ENCODE measurements at regions of chr5 and their contacts with region 1.

Region 1: DNA sequence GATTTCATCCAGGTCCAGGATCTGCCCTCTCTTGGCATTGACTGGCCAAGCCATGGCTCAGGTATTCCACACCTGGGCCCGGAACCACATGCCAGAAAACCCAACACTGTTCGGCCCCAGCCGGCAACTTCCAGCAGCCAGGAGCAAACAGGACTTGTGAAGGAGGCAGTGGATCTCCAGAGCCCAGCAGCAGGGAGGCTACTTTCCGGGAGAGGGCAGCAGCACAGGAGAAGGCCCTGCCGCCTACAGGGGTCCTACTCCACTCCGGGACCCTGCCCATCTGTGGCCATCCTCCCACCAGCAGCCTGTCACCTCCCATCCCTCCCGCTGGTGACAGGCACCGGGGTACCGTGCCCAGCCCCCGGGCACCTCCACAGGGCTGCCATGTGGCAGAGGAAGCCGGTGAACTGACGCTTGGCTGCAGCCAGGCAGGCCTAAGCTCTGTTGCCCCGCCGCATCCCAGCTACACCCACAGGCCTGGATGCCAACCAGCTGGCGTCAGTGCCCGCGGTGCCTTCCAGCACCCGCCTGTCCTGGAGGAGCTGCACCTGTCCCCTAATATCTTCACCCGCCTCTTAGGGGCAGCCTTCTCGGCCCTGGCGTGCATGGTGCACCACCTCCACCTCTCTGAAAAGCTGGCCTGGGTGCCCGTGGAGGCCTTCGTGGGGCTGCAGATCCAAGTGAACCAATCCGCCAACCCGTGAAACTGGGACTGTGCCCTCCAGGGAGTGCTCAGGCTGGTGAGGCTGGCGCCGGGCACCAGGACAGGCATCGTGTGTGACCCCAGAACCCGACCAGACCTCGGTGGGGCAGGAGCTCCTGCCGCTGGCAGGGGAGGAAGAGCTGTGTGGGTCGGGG is 18.9 kb upstream of the SLC30A5 start:
- DNase-seq: no peak
- ATAC-seq: no peak
- H3K4me3 ChIP-seq: no peak overlapping the region
- H3K27ac ChIP-seq: no peak overlapping the region
- H3K4me1 ChIP-seq: peaks cover 2 to 5% of the 10 kb centered on the region in 2 experiments; a peak in 2 of 4 replicates
- H3K27me3 ChIP-seq: no peaks in the 10 kb centered on the region
- CTCF ChIP-seq: no peak
- POLR2A ChIP-seq: no peak
- RAD21 ChIP-seq: no peak

Region 2: DNA sequence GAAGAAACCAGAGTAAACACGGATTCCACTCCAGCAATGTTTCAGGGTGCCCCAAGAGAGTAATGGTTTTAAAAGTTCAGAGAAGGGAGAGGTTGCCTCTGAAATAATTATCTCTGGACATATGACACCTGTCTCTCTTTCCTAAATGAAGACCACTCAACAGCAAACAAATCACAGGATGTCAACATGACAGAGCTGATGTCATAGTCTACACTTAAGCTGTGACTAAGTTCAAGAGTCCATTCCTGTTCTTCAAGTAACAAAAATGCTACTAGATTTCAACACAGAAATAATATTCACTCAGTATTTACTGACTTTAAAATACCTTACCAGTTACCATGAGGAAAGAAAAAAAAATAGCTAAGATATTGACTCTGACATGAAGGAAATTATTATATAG is 25.7 kb before region 1 on chr5:
- CTCF ChIA-PET with region 1: no interaction called
- POLR2A ChIA-PET with region 1: no interaction called
- RAD21 ChIA-PET with region 1: no interaction called
- intact Hi-C with region 1: loop called (anchors 1 kb)
- DNase-seq: no peak
- ATAC-seq: no peak
- H3K4me3 ChIP-seq: no peak overlapping the region
- H3K27ac ChIP-seq: no peak overlapping the region
- H3K4me1 ChIP-seq: 0 out of 4 replicates have a peak, but pooled peaks cover 0 to 3% of the 10 kb centered on the region in 2 experiments
- H3K27me3 ChIP-seq: no peaks in the 10 kb centered on the region
- CTCF ChIP-seq: no peak
- POLR2A ChIP-seq: no peak
- RAD21 ChIP-seq: no peak

Region 3: GRCh38 chr5:69129413-69129812 is 54.5 kb after region 1 on chr5:
- CTCF ChIA-PET with region 1: no interaction called
- POLR2A ChIA-PET with region 1: no interaction called
- RAD21 ChIA-PET with region 1: no interaction called
- intact Hi-C with region 1: loop called (anchors 10 kb)
- DNase-seq: no peak
- ATAC-seq: no peak
- H3K4me3 ChIP-seq: no peak overlapping the region
- H3K27ac ChIP-seq: no peak overlapping the region
- H3K4me1 ChIP-seq: no peaks in the 10 kb centered on the region
- H3K27me3 ChIP-seq: no peaks in the 10 kb centered on the region
- CTCF ChIP-seq: no peak
- POLR2A ChIP-seq: no peak
- RAD21 ChIP-seq: no peak